ENCODE measurements at regions of chr10 and their contacts with region 1.

Region 1: DNA sequence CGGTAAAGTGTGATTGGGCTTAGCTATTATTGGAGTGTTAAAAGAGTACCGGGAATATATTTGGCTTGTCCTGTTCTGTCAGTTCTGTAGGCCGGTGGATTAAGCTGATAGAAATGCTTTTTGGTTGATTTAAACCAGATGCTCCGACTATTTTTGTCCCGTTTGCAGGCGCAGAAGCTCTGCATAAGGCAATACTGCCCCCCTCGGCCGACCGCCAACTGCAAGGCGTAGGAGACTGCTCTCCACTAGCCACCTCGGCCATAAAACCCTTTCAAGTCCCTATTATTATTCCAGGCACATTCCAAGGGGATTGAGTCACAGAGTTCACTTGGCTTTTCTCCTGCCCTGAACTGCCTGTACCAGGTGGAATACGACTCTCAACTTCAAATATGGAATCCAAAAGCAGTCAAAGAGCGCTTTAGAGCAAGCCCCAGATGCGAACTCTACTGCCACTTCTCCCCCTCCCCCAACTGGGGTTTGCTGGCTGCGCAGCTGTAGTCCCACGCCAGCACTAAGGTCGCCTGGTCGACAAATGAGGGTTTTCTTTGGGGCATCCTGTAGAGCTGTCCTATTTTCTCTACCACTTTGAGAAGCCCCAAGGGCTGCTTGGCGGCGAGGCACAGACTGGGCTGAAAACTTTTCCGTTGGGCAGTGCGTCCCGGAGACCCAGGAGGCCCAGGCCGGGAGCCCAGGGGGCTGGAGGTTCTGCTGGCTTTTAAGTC is 108.3 kb downstream of the REEP3 start:
- DNase-seq: peak; percentile 93
- H3K4me3 ChIP-seq: peak overlapping the region; percentile 73
- CTCF ChIP-seq: peak; percentile 82

Region 2: GRCh38 chr10:63052083-63052482 is 577.4 kb before region 1 on chr10:
- CTCF ChIA-PET with region 1: no interaction called
- POLR2A ChIA-PET with region 1: no interaction called
- DNase-seq: no peak
- H3K4me3 ChIP-seq: no peak overlapping the region
- CTCF ChIP-seq: no peak

Region 3: DNA sequence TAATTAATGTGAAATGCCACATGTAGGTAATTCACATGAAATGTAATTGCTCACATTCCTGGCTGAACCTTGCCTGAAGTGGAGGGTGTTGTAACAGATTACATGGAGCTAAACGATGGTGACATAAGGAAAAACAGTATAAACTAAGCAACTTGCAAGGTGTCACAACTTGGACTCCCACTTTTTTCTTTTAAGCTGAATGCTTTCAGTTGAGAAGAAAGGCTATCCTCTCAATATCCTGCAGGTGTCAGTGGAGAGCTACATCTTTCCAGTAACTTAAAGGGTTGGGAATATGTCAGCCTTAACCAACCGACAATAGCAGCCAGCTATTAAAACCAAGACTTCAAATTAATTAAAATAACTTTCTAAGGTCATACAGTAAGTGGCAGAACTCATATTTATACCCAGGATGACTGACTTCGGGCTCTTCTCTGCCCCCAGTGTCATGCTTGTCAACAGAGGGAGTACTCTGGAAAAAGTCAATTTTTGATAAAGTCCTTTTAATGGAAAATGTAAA is 462.7 kb before region 1 on chr10:
- CTCF ChIA-PET with region 1: interaction called, 166 read pairs
- POLR2A ChIA-PET with region 1: interaction called, 20 read pairs
- DNase-seq: peak; percentile 28
- H3K4me3 ChIP-seq: no peak overlapping the region
- CTCF ChIP-seq: peak; percentile 62

Region 4: GRCh38 chr10:63217120-63217605 is 412.4 kb before region 1 on chr10:
- CTCF ChIA-PET with region 1: interaction called, 23 read pairs
- POLR2A ChIA-PET with region 1: interaction called, 3 read pairs
- DNase-seq: no peak
- H3K4me3 ChIP-seq: no peak overlapping the region
- CTCF ChIP-seq: peak; percentile 42

Region 5: DNA sequence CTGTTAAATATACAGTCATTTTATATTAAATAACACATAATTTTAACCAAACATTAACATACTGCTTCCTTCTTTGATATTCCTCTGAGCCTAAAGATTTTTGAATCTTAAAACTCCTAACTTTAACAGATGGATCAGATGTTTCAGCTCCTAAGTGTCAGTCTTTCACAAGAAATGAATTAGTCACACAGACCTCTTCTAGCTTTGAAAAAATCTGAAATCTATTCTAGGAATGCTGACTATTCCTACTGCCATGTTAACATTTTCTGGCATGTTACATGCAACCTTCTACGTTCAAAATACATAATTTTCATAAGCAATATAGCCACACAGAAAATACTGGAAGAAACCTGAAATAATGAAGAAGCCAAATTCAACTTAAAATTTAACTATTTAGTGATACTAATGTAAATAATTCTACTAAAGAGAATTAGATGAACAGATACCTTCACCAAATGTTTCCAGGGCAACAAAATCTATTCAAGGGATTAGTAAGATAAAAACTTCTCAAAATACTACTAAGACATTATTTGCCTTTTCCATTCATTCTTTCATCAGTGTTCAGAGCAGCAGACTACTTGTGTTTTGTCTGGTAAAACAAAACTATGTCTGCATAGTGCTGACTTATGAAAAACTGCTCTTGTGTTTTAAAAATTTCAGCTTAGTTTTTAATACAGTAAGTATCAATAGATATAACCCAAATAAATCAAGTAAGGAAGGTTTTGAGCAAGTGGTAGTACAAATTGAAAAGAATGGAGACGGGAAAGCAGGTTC is 172.9 kb before region 1 on chr10:
- CTCF ChIA-PET with region 1: interaction called, 11 read pairs
- POLR2A ChIA-PET with region 1: no interaction called
- DNase-seq: no peak
- H3K4me3 ChIP-seq: no peak overlapping the region
- CTCF ChIP-seq: no peak

Region 6: GRCh38 chr10:63608511-63608910 is 21.0 kb before region 1 on chr10:
- CTCF ChIA-PET with region 1: interaction called, 11 read pairs
- POLR2A ChIA-PET with region 1: no interaction called
- DNase-seq: no peak
- H3K4me3 ChIP-seq: no peak overlapping the region
- CTCF ChIP-seq: no peak

Region 7: DNA sequence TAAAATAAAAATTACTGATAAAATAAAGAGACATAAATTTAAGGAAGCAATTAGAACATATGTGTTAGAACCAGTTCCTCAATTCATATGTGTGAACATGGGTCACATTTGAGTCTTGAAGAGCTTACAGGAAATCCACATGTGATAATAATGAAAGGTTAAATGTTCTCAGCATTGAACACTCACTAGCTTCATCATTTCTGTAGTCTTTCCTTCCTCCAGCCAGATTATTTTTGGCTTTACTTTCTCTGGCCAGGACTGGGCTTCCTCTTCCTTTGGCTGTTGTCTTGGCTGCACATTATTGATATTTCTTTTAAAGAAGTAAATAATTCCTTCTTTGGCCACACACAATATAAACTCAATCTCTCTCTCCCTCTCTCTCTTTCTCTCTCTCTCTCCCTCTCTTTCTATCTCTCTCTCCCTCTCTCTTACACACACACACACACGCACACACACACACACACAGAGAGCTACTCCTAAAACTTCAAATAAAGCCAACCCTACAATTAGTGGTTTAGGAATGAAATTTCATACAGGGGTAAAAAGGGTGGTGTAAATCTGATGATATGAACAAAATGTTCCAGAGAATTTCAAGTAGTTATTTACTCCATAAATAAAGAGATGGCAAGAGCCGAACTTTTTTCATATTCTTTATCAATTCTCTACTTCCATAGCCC is 62.8 kb after region 1 on chr10:
- CTCF ChIA-PET with region 1: no interaction called
- POLR2A ChIA-PET with region 1: no interaction called
- DNase-seq: no peak
- H3K4me3 ChIP-seq: no peak overlapping the region
- CTCF ChIP-seq: no peak

Region 8: GRCh38 chr10:63707254-63707910 is 77.9 kb after region 1 on chr10:
- CTCF ChIA-PET with region 1: interaction called, 4 read pairs
- POLR2A ChIA-PET with region 1: interaction called, 15 read pairs
- DNase-seq: peak; percentile 96
- H3K4me3 ChIP-seq: no peak overlapping the region
- CTCF ChIP-seq: no peak

Measured in AG04449 (cell line).